CD8-positive, alpha-beta T cell (primary cell): ENCODE measurements at regions of chr17 and their contacts with region 1.

Region 1: DNA sequence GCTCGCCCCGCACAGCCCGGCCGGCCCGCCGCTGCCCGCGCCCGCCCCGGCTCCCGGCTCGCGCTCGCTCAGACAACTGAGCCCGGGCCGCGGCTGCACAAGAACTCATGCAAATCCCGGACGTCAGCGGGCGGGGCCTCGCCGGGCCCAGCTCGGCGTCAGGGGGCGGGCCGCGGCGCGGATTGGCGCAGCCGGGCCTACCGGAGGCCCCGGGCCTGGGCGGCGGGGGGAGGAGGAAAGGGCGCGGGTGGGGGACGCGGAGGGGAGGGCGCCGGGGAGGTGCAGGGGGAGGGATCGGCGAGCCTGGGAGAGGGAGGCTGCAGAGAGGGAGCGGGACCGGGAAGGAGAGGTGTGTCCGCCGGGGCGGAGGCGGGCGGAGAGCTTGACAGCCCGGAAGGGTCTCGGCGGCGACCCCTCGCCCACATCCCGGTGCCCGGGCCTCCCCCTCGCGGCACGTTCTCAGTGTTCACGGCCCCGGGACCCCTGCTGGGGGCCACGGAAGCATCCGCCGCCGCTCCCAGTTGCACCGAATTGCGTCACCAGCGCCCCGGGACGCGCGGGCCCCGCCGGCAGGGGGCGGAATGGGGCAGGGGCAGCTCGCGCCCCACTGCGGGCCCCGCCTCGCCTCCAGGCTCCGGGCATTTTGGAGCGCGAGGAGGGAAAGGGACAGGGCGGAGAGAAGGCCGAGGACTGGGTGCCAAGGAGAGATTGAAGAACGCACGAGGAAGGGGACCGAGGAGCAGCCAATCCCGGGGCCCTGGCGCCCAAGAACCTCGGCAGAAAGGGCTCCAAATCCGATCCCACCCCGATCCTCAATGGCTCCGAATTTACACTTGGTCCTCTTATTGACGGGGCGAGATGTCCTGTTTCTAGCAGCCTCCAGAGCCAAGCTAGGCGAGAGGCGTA is at the start of gene CBX4:
- DNase-seq: peak; percentile 83 to 96 (median 92)
- ATAC-seq: peak; percentile 72
- H3K4me3 ChIP-seq: peak within 1 kb of the TSS; percentile 85 to 90
- H3K4me3 Mint-ChIP-seq: peak within 1 kb of the TSS; percentile 98
- H3K27ac ChIP-seq: peak within 1 kb of the TSS; percentile 68 to 89
- H3K27ac Mint-ChIP-seq: peak within 1 kb of the TSS; percentile 98
- H3K4me1 ChIP-seq: peaks cover 81% of the 10 kb centered on the region
- H3K4me1 Mint-ChIP-seq: peaks cover 44% of the 10 kb centered on the region
- H3K27me3 ChIP-seq: peaks cover 36 to 40% of the 10 kb centered on the region in 2 experiments
- H3K27me3 Mint-ChIP-seq: peaks cover 22% of the 10 kb centered on the region
- CTCF ChIP-seq: peak; percentile 75
- total RNA-seq, gene CBX4: 263 to 268 TPM

Region 2: DNA sequence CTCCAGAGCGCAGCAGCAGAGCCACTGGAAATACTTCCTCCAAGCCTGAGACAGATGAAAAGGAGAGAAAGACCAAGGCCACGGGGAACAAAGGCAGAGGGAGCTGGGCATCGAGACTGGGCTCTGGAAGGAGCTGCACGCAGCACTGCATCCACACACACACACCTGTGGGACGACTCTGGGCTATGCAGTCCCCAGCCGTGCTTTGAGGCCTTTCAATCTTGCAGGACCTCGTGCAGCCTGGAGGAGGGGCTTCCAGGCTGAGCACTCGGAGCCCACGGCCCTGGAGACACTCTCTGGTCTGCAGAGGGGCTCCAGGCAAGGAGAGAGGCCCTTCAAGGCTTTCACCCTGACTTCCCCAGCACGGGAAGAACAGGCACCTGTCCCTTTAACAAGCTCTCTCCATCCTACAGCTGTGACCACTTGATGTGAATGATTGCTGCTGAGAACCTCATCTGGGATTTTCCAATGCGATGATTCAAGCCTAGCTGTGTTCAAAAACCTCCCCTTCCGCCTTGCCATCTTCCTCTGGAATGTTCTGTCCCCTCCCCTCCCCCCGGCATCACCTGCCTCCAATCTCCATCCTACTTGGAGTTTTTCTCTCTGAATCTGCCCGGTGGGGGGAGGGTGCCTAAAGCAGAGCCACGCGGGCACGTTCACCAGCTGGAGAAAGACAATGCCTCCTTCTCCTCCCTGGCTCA is 266.3 kb before region 1 on chr17:
- CTCF ChIA-PET with region 1: no interaction called
- POLR2A ChIA-PET with region 1: no interaction called
- intact Hi-C with region 1: no loop called
- DNase-seq: no peak
- ATAC-seq: no peak
- H3K4me3 ChIP-seq: no peak overlapping the region
- H3K4me3 Mint-ChIP-seq: no peak overlapping the region
- H3K27ac ChIP-seq: no peak overlapping the region
- H3K27ac Mint-ChIP-seq: no peak overlapping the region
- H3K4me1 ChIP-seq: no peaks in the 10 kb centered on the region
- H3K4me1 Mint-ChIP-seq: no peaks in the 10 kb centered on the region
- H3K27me3 ChIP-seq: peaks cover 0 to 2% of the 10 kb centered on the region in 2 experiments
- H3K27me3 Mint-ChIP-seq: peaks cover 11% of the 10 kb centered on the region
- CTCF ChIP-seq: no peak

Region 3: GRCh38 chr17:79589669-79590522 is 249.7 kb before region 1 on chr17:
- CTCF ChIA-PET with region 1: no interaction called
- POLR2A ChIA-PET with region 1: no interaction called
- intact Hi-C with region 1: no loop called
- DNase-seq: peak in 1 of 9 experiments; percentile 6
- ATAC-seq: no peak
- H3K4me3 ChIP-seq: no peak overlapping the region
- H3K4me3 Mint-ChIP-seq: no peak overlapping the region
- H3K27ac ChIP-seq: no peak overlapping the region
- H3K27ac Mint-ChIP-seq: no peak overlapping the region
- H3K4me1 ChIP-seq: no peaks in the 10 kb centered on the region
- H3K4me1 Mint-ChIP-seq: no peaks in the 10 kb centered on the region
- H3K27me3 ChIP-seq: no peaks in the 10 kb centered on the region
- H3K27me3 Mint-ChIP-seq: peaks cover 24% of the 10 kb centered on the region
- CTCF ChIP-seq: no peak

Region 4: GRCh38 chr17:79658811-79659207 is 180.8 kb before region 1 on chr17:
- CTCF ChIA-PET with region 1: no interaction called
- POLR2A ChIA-PET with region 1: no interaction called
- intact Hi-C with region 1: no loop called
- DNase-seq: peak in 2 of 9 experiments; percentile 8 to 44
- ATAC-seq: no peak
- H3K4me3 ChIP-seq: no peak overlapping the region
- H3K4me3 Mint-ChIP-seq: no peak overlapping the region
- H3K27ac ChIP-seq: no peak overlapping the region
- H3K27ac Mint-ChIP-seq: no peak overlapping the region
- H3K4me1 ChIP-seq: no peaks in the 10 kb centered on the region
- H3K4me1 Mint-ChIP-seq: peaks cover 3% of the 10 kb centered on the region
- H3K27me3 ChIP-seq: peaks cover 6 to 8% of the 10 kb centered on the region in 2 experiments
- H3K27me3 Mint-ChIP-seq: peaks cover 56% of the 10 kb centered on the region
- CTCF ChIP-seq: no peak

Region 5: GRCh38 chr17:79741751-79742588 is 97.6 kb before region 1 on chr17:
- CTCF ChIA-PET with region 1: interaction called, 4 read pairs
- POLR2A ChIA-PET with region 1: interaction called, 3 read pairs
- intact Hi-C with region 1: loop called (anchors 1 kb)
- DNase-seq: peak; percentile 54 to 83 (median 68)
- ATAC-seq: peak; percentile 58
- H3K4me3 ChIP-seq: no peak overlapping the region
- H3K4me3 Mint-ChIP-seq: no peak overlapping the region
- H3K27ac ChIP-seq: no peak overlapping the region
- H3K27ac Mint-ChIP-seq: no peak overlapping the region
- H3K4me1 ChIP-seq: peaks cover 23% of the 10 kb centered on the region
- H3K4me1 Mint-ChIP-seq: peaks cover 8% of the 10 kb centered on the region
- H3K27me3 ChIP-seq: peaks cover 4 to 22% of the 10 kb centered on the region in 2 experiments
- H3K27me3 Mint-ChIP-seq: peaks cover 31% of the 10 kb centered on the region
- CTCF ChIP-seq: peak; percentile 95

Region 6: DNA sequence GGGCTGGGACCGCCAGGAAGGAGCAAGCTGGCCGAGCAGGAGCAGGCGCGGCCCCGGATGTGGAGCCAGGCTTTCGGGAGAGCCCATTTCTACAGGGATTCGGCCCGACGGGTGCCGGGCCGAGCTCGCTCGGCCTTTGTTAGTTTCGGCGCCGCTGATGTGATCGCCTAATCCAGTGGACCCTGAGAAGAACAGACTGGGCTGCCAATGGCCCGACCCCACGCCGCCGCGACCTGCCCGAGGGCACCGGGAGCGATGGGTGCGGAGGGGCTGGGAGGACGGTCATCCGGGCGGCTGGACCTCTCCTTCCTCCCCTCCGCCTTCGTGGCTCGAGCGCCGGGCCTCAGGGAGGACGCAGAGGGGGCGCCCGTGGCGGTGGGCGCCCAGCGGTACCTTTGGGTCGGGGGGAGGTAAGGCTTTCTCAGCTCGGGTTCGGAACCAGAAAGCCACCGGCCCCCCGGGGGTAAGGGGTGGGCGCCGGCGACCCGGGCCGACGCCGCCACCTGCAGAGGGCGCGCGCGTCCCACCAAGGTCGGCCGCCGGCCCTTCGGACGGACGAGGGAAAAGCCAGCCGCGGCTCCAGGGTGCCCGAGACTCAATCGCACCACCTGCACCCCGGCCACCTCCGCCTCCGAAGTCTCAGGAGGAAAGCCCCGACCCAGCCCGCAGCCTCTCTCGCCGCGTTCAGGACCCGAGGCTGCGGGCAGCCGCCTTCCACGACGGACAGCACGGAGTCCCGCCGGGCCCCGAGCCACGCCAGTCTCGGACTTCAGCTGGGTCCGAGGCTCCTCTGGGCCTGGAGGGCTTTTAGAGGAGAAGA is 49.9 kb before region 1 on chr17:
- CTCF ChIA-PET with region 1: interaction called, 13 read pairs
- POLR2A ChIA-PET with region 1: interaction called, 4 read pairs
- intact Hi-C with region 1: no loop called
- DNase-seq: peak in 2 of 9 experiments; percentile 54 to 56
- ATAC-seq: peak; percentile 24
- H3K4me3 ChIP-seq: no peak overlapping the region
- H3K4me3 Mint-ChIP-seq: peak overlapping the region; percentile 29
- H3K27ac ChIP-seq: no peak overlapping the region
- H3K27ac Mint-ChIP-seq: no peak overlapping the region
- H3K4me1 ChIP-seq: peaks cover 27% of the 10 kb centered on the region
- H3K4me1 Mint-ChIP-seq: peaks cover 14% of the 10 kb centered on the region
- H3K27me3 ChIP-seq: peaks cover 33 to 39% of the 10 kb centered on the region in 2 experiments
- H3K27me3 Mint-ChIP-seq: peaks cover 49% of the 10 kb centered on the region
- CTCF ChIP-seq: peak; percentile 56

Region 7: DNA sequence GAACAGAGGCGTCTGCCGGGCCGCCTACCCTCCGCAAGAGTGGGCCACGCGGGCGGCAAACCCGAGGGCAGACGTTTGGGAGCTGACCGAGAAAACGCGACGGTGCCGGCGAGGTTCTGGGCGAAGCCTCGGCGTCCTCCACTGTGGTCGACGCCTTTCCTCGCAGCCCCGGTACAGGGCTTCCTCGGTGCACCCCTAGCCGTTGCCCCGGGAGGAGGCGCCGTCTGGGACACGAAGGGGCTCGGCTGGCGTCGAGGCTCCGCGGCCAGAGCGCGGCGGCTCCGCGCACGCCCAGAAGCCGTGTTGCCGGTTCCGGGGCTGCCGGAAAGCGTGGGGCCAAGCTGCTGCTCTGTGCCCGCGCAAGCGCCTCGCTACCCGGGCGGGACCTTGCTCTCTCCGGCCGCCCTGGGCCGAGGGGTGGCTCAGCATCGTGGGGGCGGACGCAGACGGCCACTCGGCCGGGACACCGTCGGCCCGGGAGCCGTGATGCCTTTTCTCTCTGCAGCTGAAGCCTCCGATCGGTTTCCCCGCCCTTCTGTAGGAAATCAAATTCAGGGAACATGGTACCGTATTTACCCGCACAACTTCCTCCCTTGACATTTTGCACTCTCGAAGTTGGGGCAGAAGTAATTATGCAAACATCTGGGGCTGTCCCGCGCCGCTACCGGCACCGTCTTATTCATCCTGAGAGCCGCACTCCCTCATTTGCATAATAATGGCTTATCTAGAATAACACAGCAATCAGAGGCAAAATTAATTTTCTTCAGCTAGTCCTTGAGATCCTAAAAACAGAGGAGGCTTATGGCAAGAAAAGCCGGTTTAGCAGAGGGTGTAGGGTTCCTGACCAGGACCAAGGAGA is 35.4 kb before region 1 on chr17:
- CTCF ChIA-PET with region 1: interaction called, 20 read pairs
- POLR2A ChIA-PET with region 1: interaction called, 41 read pairs
- intact Hi-C with region 1: no loop called
- DNase-seq: peak in 3 of 9 experiments; percentile 49 to 67 (median 52)
- ATAC-seq: peak; percentile 47
- H3K4me3 ChIP-seq: no peak overlapping the region
- H3K4me3 Mint-ChIP-seq: peak overlapping the region; percentile 66
- H3K27ac ChIP-seq: no peak overlapping the region
- H3K27ac Mint-ChIP-seq: no peak overlapping the region
- H3K4me1 ChIP-seq: peaks cover 51% of the 10 kb centered on the region
- H3K4me1 Mint-ChIP-seq: peaks cover 44% of the 10 kb centered on the region
- H3K27me3 ChIP-seq: peaks cover 96% of the 10 kb centered on the region in 2 experiments
- H3K27me3 Mint-ChIP-seq: peaks cover 79% of the 10 kb centered on the region
- CTCF ChIP-seq: no peak

Region 8: GRCh38 chr17:79850571-79851461 is 11.2 kb after region 1 on chr17:
- CTCF ChIA-PET with region 1: interaction called, 18 read pairs
- POLR2A ChIA-PET with region 1: interaction called, 5 read pairs
- intact Hi-C with region 1: no loop called
- DNase-seq: peak in 1 of 9 experiments; percentile 18
- ATAC-seq: peak; percentile 44
- H3K4me3 ChIP-seq: no peak overlapping the region
- H3K4me3 Mint-ChIP-seq: no peak overlapping the region
- H3K27ac ChIP-seq: no peak overlapping the region
- H3K27ac Mint-ChIP-seq: no peak overlapping the region
- H3K4me1 ChIP-seq: no peaks in the 10 kb centered on the region
- H3K4me1 Mint-ChIP-seq: peaks cover 7% of the 10 kb centered on the region
- H3K27me3 ChIP-seq: no peaks in the 10 kb centered on the region
- H3K27me3 Mint-ChIP-seq: peaks cover 8% of the 10 kb centered on the region
- CTCF ChIP-seq: no peak

Region 9: GRCh38 chr17:80035943-80036714 is 196.5 kb after region 1 on chr17 and contains the start of gene CCDC40:
- CTCF ChIA-PET with region 1: no interaction called
- POLR2A ChIA-PET with region 1: no interaction called
- intact Hi-C with region 1: loop called in 1 of 2 experiments (anchors 5 kb)
- DNase-seq: peak; percentile 66 to 93 (median 79)
- ATAC-seq: peak; percentile 79
- H3K4me3 ChIP-seq: peak within 1 kb of the TSS; percentile 64 to 86
- H3K4me3 Mint-ChIP-seq: peak within 1 kb of the TSS; percentile 89
- H3K27ac ChIP-seq: peak within 1 kb of the TSS; percentile 75 to 80
- H3K27ac Mint-ChIP-seq: peak within 1 kb of the TSS; percentile 49
- H3K4me1 ChIP-seq: peaks cover 12% of the 10 kb centered on the region
- H3K4me1 Mint-ChIP-seq: peaks cover 13% of the 10 kb centered on the region
- H3K27me3 ChIP-seq: peaks cover 0 to 6% of the 10 kb centered on the region in 2 experiments
- H3K27me3 Mint-ChIP-seq: peaks cover 10% of the 10 kb centered on the region
- CTCF ChIP-seq: peak; percentile 25
- total RNA-seq, gene CCDC40: 1.0 to 1.2 TPM

Region 10: GRCh38 chr17:81512560-81513371 is 1673.2 kb after region 1 on chr17 and contains the start of gene ACTG1:
- CTCF ChIA-PET with region 1: no interaction called
- POLR2A ChIA-PET with region 1: interaction called, 3 read pairs
- intact Hi-C with region 1: loop called in 1 of 2 experiments (anchors 5 kb)
- DNase-seq: peak; percentile 87 to 97 (median 92)
- ATAC-seq: peak; percentile 60
- H3K4me3 ChIP-seq: peak within 1 kb of the TSS; percentile 84 to 93
- H3K4me3 Mint-ChIP-seq: peak within 1 kb of the TSS; percentile 98
- H3K27ac ChIP-seq: peak within 1 kb of the TSS; percentile 56 to 93
- H3K27ac Mint-ChIP-seq: peak within 1 kb of the TSS; percentile 98
- H3K4me1 ChIP-seq: peaks cover 49% of the 10 kb centered on the region
- H3K4me1 Mint-ChIP-seq: peaks cover 57% of the 10 kb centered on the region
- H3K27me3 ChIP-seq: no peaks in the 10 kb centered on the region
- H3K27me3 Mint-ChIP-seq: no peaks in the 10 kb centered on the region
- CTCF ChIP-seq: no peak
- total RNA-seq, gene ACTG1: 1,370 to 1,375 TPM